GM12878 (cell line): ENCODE measurements at regions of chr1 and their contacts with region 1.

Region 1: DNA sequence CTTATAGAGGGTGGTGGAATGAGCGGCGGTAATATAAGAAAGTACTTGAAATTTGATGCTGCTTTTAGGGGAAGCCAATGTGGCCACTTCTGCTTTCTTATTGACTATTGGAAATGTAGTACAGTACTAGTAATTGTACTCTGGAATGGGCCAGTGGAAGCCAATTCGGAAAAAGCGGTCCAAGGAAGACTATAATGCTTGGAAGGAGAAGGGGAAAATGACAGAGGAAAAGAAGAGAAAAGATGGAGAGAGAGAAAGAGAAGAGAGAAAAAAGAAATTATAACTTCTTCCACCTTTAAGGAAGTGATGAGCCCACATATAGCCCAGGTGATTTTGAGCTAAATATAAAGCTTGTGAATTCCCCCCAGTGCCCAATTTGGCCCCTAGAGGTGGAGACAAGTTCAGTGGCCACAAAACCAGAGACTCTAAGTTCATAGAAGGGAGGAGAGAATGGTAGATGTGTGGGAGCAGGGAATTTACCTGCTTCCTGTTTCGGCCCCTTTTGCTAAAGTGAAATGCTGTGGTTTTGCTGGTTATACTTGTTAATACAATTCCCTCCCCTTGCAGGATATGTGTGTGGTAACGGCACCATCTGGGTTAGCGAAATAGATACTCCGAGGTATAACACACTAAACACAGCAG is 35.7 kb upstream of the DUSP10 start:
- DNase-seq: peak; percentile 99
- ATAC-seq: peak; percentile 73
- H3K4me3 ChIP-seq: peak overlapping the region; percentile 47; the same call in 1 of the 2 replicates
- H3K27ac ChIP-seq: peak overlapping the region; percentile 89
- H3K4me1 ChIP-seq: peaks cover 61% of the 10 kb centered on the region
- H3K27me3 ChIP-seq: no peaks in the 10 kb centered on the region
- CTCF ChIP-seq: peak in 1 of 3 experiments; percentile 9; a peak in 1 of 6 replicates
- EP300 ChIP-seq: peak; percentile 97 to 98
- POLR2A ChIP-seq: no peak
- RAD21 ChIP-seq: peak; percentile 38

Region 2: GRCh38 chr1:221708987-221709386 is 68.6 kb before region 1 on chr1:
- CTCF ChIA-PET with region 1: interaction called, 5 read pairs
- POLR2A ChIA-PET with region 1: interaction called, 12 read pairs
- RAD21 ChIA-PET with region 1: interaction called, 24 read pairs
- SMC1A ChIA-PET with region 1: interaction called, 61 read pairs
- in situ Hi-C with region 1: no loop called
- intact Hi-C with region 1: loop called (anchors 1 kb)
- DNase-seq: no peak
- ATAC-seq: peak; percentile 74
- H3K4me3 ChIP-seq: no peak overlapping the region
- H3K27ac ChIP-seq: peak overlapping the region; percentile 81
- H3K4me1 ChIP-seq: peaks cover 51% of the 10 kb centered on the region
- H3K27me3 ChIP-seq: no peaks in the 10 kb centered on the region
- CTCF ChIP-seq: no peak
- EP300 ChIP-seq: peak; percentile 76 to 97
- POLR2A ChIP-seq: no peak
- RAD21 ChIP-seq: no peak; the same call in 1 of the 2 replicates

Region 3: GRCh38 chr1:221753828-221754188 is 23.7 kb before region 1 on chr1:
- CTCF ChIA-PET with region 1: interaction called, 153 read pairs
- POLR2A ChIA-PET with region 1: interaction called, 203 read pairs
- RAD21 ChIA-PET with region 1: interaction called, 393 read pairs
- SMC1A ChIA-PET with region 1: interaction called, 510 read pairs
- in situ Hi-C with region 1: no loop called
- intact Hi-C with region 1: loop called (anchors 1 kb)
- DNase-seq: no peak
- ATAC-seq: peak; percentile 58
- H3K4me3 ChIP-seq: no peak overlapping the region
- H3K27ac ChIP-seq: peak overlapping the region; percentile 73
- H3K4me1 ChIP-seq: peaks cover 49% of the 10 kb centered on the region
- H3K27me3 ChIP-seq: no peaks in the 10 kb centered on the region
- CTCF ChIP-seq: no peak
- EP300 ChIP-seq: no peak
- POLR2A ChIP-seq: no peak
- RAD21 ChIP-seq: no peak

Region 4: DNA sequence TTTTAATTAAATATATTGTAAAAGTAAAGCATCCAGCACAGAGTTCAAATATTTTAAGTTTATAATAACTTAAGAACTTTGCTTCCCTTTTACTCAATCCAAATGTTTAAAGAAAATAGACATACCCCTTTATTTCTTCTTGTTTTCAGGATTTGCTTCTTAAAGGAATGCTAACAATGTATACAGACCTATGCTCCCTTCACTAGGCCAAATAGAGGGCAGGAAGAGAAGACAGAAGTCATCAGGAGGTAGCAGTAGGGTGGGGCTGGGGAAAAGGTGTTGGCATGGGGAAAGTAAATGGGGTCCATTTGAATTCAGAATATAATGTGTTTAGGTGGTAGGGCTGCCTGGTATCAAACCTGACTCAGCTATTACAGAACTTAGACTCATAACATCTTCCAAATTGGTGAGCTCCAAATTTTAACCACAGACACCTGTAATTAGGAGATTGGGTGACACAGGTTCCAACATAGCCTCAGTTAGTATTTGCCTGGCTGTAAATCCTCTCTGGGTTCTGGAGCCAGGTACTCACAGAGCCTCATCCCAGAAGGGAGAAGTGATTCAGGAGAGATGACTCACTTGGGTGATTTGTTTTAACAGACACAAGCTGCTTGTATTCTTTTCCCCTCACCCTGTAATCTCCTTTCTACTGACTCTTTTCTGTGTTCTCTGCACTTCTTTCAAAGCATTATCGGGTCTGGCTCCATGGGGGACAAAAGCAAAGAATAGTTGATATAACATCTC is 24.4 kb after region 1 on chr1:
- CTCF ChIA-PET with region 1: no interaction called
- POLR2A ChIA-PET with region 1: no interaction called
- RAD21 ChIA-PET with region 1: interaction called, 69 read pairs
- SMC1A ChIA-PET with region 1: interaction called, 15 read pairs
- in situ Hi-C with region 1: no loop called
- intact Hi-C with region 1: no loop called
- DNase-seq: no peak
- ATAC-seq: peak; percentile 53
- H3K4me3 ChIP-seq: no peak overlapping the region
- H3K27ac ChIP-seq: no peak overlapping the region
- H3K4me1 ChIP-seq: peaks cover 6% of the 10 kb centered on the region; the same call in 1 of the 2 replicates
- H3K27me3 ChIP-seq: no peaks in the 10 kb centered on the region
- CTCF ChIP-seq: no peak
- EP300 ChIP-seq: no peak
- POLR2A ChIP-seq: no peak
- RAD21 ChIP-seq: no peak

Region 5: GRCh38 chr1:221829327-221830015 is 51.9 kb after region 1 on chr1:
- CTCF ChIA-PET with region 1: interaction called, 8 read pairs
- POLR2A ChIA-PET with region 1: no interaction called
- RAD21 ChIA-PET with region 1: interaction called, 7 read pairs
- SMC1A ChIA-PET with region 1: interaction called, 10 read pairs
- in situ Hi-C with region 1: no loop called
- intact Hi-C with region 1: loop called (anchors 5 kb)
- DNase-seq: no peak
- ATAC-seq: peak; percentile 82
- H3K4me3 ChIP-seq: no peak overlapping the region
- H3K27ac ChIP-seq: no peak overlapping the region
- H3K4me1 ChIP-seq: peaks cover 8% of the 10 kb centered on the region
- H3K27me3 ChIP-seq: no peaks in the 10 kb centered on the region
- CTCF ChIP-seq: no peak
- EP300 ChIP-seq: no peak
- POLR2A ChIP-seq: no peak
- RAD21 ChIP-seq: no peak

Region 6: GRCh38 chr1:221939607-221940006 is 162.1 kb after region 1 on chr1:
- CTCF ChIA-PET with region 1: no interaction called
- POLR2A ChIA-PET with region 1: no interaction called
- RAD21 ChIA-PET with region 1: interaction called, 4 read pairs
- SMC1A ChIA-PET with region 1: interaction called, 12 read pairs
- in situ Hi-C with region 1: no loop called
- intact Hi-C with region 1: no loop called
- DNase-seq: peak; percentile 84
- ATAC-seq: peak; percentile 90
- H3K4me3 ChIP-seq: no peak overlapping the region
- H3K27ac ChIP-seq: no peak overlapping the region; the same call in 1 of the 2 replicates
- H3K4me1 ChIP-seq: peaks cover 19% of the 10 kb centered on the region
- H3K27me3 ChIP-seq: no peaks in the 10 kb centered on the region
- CTCF ChIP-seq: no peak
- EP300 ChIP-seq: peak in 1 of 2 experiments; percentile 56; a peak in 1 of 4 replicates
- POLR2A ChIP-seq: no peak
- RAD21 ChIP-seq: no peak

Region 7: DNA sequence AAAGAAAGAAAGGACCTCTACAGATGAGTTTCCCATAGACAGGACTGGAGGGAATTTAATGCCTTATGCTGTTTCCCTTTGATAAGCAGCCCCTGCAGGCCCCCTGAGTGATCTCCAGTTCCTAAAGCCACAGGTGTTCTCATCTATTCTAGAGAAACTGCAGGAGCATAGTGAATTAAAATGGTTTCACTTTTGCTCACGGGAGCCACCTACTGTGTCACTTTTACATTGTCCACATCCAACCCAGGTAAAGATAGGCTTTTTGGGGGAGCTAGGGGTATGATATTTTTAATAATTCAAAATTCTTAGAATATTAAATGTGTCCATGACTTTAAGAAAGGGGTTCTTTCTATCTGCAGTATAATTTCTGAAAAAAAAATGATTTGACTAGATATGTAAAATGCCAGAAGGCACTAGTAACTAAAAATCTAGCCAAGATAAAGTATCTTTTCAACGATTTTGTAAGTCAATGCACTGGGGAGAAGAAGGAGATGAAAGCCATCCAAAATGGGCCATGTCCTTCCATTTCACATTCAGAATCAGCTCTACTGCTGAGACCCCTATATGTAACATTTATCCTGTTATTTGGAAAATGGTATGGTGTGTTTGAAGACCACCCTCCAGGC is 231.7 kb after region 1 on chr1:
- CTCF ChIA-PET with region 1: interaction called, 18 read pairs
- POLR2A ChIA-PET with region 1: no interaction called
- RAD21 ChIA-PET with region 1: interaction called, 5 read pairs
- SMC1A ChIA-PET with region 1: interaction called, 21 read pairs
- in situ Hi-C with region 1: no loop called
- intact Hi-C with region 1: loop called (anchors 2 kb)
- DNase-seq: peak; percentile 36
- ATAC-seq: peak; percentile 95
- H3K4me3 ChIP-seq: no peak overlapping the region
- H3K27ac ChIP-seq: no peak overlapping the region
- H3K4me1 ChIP-seq: no peaks in the 10 kb centered on the region
- H3K27me3 ChIP-seq: no peaks in the 10 kb centered on the region
- CTCF ChIP-seq: peak; percentile 45 to 59 (median 48); a peak in 5 of 6 replicates
- EP300 ChIP-seq: no peak
- POLR2A ChIP-seq: no peak
- RAD21 ChIP-seq: peak; percentile 74